Posterior vena cava (tissue), 2 donors: ENCODE measurements at regions of chr20 and their contacts with region 1.

Region 1: DNA sequence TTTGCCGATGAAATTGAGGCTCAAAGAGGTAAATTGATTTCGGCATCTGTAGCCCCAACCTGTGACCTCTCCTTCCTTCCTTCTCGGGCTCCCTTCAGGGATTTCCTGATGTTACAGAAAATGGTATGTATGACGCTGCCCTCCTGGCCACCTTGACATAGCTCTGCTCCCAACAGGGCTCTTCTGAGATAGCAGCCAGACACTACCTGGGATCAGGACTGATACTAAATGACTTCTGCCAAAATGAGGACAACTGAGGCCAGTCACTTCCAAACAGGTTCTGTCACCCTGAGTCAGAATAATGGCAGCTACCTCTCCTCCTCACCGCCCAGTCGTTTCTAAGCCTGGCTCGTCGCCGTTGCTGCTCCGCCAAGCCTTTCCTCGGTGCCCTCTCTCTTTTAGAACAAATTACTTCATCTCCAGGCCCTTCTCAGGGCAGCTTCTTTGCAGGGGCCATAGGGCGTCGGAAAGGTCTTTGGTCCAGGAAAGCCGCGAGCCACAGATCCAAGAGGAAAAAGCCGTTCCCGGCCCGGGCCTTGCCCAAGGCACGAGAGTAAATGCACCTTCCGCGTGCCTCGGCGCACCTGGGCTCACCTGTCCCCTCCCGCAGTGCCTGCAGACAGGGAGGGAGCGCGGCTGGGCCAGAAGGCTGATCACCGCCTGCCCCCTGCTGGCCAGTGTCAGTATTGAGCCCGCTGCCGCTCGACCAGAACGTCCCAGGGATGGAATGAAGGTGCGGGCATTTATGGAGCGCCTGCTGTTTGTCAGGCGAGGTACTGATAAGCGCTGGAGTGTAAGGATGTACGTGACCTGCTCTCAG is 904 bp upstream of the LPIN3 start:
- DNase-seq: peak; percentile 95

Region 2: DNA sequence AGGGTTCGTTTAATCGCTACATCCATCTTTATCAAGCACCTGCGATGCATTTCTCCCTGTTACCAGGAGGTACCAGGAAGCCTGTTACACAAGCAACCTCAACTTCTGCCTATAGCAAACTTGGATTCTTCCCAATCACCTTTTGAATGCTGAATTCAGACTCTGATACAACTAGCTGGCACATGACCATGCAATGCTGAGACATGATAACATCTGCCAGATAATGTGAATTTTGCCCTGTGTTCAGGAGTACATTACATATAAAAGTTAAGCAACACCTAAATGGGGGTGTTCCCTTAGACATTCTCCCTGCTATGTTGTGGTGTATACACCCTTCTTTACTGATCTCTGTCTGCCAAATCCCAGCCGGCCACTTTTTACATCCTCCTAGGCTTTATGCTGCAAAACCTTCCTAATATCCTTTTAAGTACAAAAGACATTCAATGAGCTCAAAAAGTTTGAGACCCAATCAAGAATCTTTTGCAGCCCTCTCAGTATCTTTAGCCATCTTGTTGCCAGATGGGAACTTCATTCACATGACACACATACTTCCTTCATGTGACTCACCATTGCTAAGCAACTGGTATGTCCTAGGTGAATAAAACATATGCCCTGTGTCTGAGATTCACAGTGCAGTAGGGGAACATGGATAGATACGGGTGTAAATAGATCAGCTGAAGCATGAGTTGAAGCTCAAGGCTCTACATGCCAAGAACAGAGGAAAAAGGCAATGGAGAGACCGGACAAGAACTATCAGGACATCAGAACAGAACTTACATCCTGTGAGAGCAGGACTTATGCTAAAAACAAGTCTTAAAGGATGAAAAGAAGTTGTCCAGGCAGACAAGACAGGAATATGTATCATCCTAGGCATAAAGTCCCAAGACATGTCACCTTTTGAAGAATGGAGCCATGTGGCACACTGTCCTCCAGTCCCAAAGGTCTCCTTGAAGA is 106.5 kb before region 1 on chr20:
- intact Hi-C with region 1: no loop called
- DNase-seq: no peak

Region 3: DNA sequence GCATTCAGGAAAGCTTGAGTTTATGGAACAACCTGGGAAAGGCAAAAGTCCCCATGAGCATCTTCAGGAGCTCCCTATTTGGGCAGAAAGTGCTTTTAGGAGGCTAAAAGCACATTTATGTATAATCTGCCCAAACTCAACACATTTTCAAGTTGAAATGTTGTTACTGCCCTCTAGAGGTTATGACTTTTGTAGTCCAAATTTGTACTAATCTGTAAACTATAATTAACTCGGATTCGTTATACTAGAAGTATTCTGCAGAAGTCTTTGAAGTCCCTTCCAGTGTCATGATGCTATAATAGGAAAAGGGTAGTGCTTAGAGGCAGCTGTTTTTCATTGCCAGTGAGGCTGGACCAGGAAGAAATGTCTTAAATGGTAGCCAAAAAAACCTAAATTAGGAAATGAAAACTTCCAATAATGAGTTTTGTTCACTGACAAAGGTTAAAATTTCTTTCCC is 71.7 kb after region 1 on chr20:
- intact Hi-C with region 1: loop called in 1 of 2 experiments (anchors 5 kb)
- DNase-seq: no peak